K562 (cell line): ENCODE measurements at regions of chr2 and their contacts with region 1.

Region 1: DNA sequence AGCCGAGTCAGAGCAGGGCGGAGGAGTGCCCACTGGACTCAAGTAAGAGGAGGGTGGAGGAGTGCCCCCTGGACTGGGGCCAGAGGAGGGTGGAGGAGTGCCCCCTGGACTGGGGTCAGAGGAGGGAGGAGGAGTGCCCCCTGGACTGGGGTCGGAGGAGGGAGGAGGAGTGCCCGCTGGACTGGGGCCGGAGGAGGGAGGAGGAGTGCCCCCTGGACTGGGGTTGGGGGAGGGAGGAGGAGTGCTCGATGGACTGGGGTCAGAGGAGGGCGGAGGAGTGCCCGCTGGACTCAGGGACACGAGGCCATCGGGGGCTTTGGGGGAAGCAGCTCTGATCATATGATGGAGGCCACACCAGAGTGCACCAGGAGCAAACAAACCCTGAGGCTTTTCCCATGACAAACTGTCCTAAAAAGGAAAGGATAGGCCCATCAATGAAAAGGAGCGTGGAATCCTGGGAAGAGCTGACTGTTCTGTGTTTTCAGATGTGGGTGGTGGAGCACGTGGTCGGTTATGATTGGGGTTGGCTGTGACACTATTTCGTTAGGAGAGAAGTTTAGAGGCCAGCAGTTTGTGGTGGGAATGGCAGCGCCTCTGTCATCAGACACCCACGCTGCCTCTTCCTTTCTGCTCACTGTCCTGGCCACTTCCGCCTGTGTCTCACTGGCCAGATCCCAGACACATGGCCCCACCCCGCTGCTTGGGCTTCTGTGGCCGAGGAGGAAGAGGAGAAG is 24.5 kb upstream of the HPCAL1 start:
- DNase-seq: peak; percentile 84 to 91 (median 86)
- ATAC-seq: peak; percentile 76
- H3K4me3 ChIP-seq: no peak overlapping the region
- H3K27ac ChIP-seq: peak overlapping the region; percentile 74
- H3K4me1 ChIP-seq: peaks cover 55 to 57% of the 10 kb centered on the region in 2 experiments
- H3K27me3 ChIP-seq: no peaks in the 10 kb centered on the region
- CTCF ChIP-seq: no peak
- EP300 ChIP-seq: peak; percentile 46; the same call in 1 of the 2 replicates
- POLR2A ChIP-seq: no peak
- RAD21 ChIP-seq: peak in 1 of 2 experiments; percentile 11; a peak in 1 of 4 replicates

Region 2: GRCh38 chr2:10331027-10331701 is 53.0 kb after region 1 on chr2:
- CTCF ChIA-PET with region 1: no interaction called
- POLR2A ChIA-PET with region 1: no interaction called
- in situ Hi-C with region 1: no loop called
- intact Hi-C with region 1: loop called (anchors 5 kb)
- DNase-seq: peak; percentile 58 to 71 (median 66)
- ATAC-seq: peak; percentile 70
- H3K4me3 ChIP-seq: no peak overlapping the region
- H3K27ac ChIP-seq: peak overlapping the region; percentile 83; the same call in 2 of the 3 replicates
- H3K4me1 ChIP-seq: peaks cover 52 to 72% of the 10 kb centered on the region in 2 experiments
- H3K27me3 ChIP-seq: no peaks in the 10 kb centered on the region
- CTCF ChIP-seq: peak in 1 of 3 experiments; percentile 28; a peak in 2 of 6 replicates
- EP300 ChIP-seq: no peak
- POLR2A ChIP-seq: no peak
- RAD21 ChIP-seq: peak; percentile 15 to 24; a peak in 2 of 4 replicates